ENCODE measurements at regions of chr13 and their contacts with region 1.

Region 1: GRCh38 chr13:59391696-59392095 is 772.0 kb downstream of the DIAPH3 start:
- DNase-seq: peak; percentile 40
- ATAC-seq: peak; percentile 65 to 80

Region 2: DNA sequence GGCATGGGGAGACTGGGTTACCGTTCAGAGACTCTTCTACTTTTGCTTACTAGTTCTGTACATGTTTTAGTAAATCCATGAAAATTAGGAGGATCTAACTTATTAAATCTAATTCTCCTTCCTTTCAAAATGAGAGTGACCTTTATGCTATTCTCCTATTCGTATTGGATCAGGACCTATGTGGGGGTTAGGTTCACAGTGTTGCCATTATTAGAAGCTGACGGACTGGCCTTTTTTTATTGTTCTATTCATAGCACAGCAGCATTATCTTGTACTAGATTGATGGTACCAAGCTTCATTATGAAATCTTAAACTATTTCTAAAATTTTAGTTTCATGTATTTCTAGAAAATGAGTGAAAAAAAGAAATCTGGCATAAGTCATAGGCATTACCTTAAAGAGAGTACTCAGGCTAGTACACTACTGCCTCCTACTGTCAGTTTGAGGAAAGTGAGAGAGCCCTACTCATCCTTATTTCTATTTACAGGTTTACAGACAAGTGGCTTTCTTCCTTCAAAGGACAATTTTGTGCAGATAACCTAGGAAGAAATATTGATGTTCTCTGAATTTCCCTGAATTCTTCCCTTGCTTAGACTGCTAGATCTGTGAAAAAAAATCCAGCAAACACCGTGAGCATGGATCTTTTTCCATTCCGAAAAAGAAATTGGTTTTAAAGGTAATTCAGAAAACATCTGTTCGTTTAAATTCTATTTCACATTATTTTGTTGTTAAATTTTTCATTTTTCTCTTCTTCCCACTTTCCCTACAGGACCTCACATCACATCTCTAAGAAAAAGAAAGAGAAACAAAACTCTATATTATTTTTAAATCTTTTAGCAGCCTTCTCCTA is 286.5 kb after region 1 on chr13:
- intact Hi-C with region 1: loop called (anchors 5 to 10 kb)
- DNase-seq: no peak
- ATAC-seq: peak; percentile 73 to 86

Region 3: DNA sequence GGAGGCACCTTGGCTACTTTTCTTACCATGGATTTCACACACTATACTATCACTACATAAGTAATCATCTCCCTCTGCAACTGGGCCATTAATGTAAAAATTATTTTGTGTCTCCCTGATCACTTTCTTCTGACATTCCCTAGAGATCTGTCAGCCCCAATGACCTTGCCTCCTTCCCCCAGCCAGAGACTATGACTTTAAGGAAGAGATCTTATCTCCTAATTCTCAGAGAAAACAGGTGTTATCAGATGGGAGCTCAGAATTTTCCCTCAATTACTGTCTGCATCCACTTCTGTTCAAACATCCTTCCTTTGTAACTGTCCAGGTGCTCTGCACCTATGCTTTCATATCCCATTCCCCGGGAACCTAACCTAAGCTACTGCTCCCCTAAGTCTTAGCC is 374.5 kb after region 1 on chr13:
- intact Hi-C with region 1: loop called in 1 of 2 experiments (anchors 10 kb)
- DNase-seq: no peak
- ATAC-seq: no peak

Region 4: DNA sequence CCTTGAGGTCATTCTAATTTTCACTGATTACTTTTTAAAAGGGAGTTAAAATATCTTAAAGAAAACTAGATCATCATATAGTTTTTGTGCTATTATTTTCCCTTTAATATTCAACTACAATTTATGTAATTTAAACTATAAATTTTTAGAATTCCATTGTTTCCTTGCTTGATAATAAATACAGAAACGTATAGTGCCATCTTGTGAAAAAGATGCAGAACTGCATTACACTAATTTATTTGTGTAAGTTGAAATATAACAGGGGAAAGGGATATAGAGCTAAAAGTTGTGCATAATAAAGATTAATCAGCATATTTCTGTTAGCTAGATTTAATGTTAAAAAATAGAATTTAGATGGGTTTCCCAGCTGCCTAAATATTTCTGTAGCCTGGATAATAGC is 943.8 kb after region 1 on chr13:
- intact Hi-C with region 1: loop called in 1 of 2 experiments (anchors 10 kb)
- DNase-seq: no peak
- ATAC-seq: no peak

Region 5: GRCh38 chr13:60453490-60453889 is 1061.8 kb after region 1 on chr13:
- intact Hi-C with region 1: no loop called
- DNase-seq: no peak
- ATAC-seq: no peak

Measured in left cardiac atrium (tissue), 4 donors.